HEK293 (cell line): ENCODE measurements at regions of chr1 and their contacts with region 1.

Region 1: DNA sequence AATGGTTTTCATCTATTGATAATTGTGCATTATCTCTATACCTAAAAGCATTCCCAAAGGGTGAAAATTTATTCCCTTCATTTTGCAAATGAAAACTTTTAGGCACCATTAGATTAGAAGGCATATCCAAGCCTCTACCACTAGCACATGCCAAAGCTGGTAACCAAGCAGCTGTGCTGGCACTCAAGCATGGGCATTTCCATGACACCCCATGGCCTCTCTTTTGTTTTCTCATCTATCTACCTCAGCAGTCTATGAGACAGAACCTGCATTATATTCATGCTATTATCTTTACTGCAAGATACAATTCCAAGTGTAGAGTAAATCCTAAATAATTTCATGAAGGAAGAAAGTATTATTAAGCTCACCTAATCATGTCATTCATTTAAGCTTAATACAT is 334.3 kb upstream of the LRRC7 start:
- H3K4me3 ChIP-seq: no peak overlapping the region
- H3K27ac ChIP-seq: no peak overlapping the region
- H3K4me1 ChIP-seq: no peaks in the 10 kb centered on the region
- CTCF ChIP-seq: no peak

Region 2: DNA sequence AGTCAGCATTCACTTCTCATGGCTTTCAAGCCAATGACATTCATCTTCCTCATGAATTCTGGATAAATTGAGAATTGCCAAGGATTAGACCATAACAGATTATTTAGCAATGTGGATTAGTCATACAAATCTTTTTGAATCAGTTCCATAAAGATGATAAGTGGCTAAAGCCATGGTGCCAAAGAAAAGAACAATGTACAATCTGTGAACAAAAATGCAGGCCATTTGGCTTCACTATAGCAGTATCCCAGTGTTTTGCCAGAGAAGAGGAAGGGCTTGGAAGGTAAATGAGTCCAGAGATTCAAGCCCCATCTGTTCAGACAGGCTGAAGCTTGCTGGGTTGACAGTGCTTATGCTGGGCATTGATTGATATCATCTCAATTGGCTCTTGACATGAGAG is 42.1 kb before region 1 on chr1:
- CTCF ChIA-PET with region 1: no interaction called
- POLR2A ChIA-PET with region 1: no interaction called
- H3K4me3 ChIP-seq: no peak overlapping the region
- H3K27ac ChIP-seq: no peak overlapping the region
- H3K4me1 ChIP-seq: no peaks in the 10 kb centered on the region
- CTCF ChIP-seq: no peak

Region 3: DNA sequence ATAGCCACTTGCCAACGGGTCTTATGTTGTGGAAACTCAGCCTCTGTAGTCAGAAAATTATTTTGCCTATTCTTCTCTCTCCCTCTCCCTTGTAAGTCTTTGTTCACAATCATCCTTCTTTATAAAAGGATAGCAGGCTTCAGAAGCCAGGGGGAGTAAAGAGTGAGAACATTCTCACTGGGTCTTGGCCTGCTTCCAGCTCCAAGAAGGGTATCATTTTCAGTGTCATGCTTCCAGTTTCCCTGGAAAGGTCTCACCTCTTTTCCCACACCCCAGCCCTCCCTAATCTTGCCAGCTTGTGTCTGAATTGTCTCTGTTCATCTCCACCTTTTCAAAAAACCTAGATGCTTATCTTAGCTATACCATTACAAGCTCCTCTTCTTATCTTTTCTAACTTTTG is 11.9 kb before region 1 on chr1:
- CTCF ChIA-PET with region 1: interaction called, 11 read pairs
- POLR2A ChIA-PET with region 1: no interaction called
- H3K4me3 ChIP-seq: no peak overlapping the region
- H3K27ac ChIP-seq: no peak overlapping the region
- H3K4me1 ChIP-seq: peaks cover 2% of the 10 kb centered on the region; the same call in 1 of the 2 replicates
- CTCF ChIP-seq: no peak